B cell (primary cell): ENCODE measurements at regions of chr11 and their contacts with region 1.

Region 1: DNA sequence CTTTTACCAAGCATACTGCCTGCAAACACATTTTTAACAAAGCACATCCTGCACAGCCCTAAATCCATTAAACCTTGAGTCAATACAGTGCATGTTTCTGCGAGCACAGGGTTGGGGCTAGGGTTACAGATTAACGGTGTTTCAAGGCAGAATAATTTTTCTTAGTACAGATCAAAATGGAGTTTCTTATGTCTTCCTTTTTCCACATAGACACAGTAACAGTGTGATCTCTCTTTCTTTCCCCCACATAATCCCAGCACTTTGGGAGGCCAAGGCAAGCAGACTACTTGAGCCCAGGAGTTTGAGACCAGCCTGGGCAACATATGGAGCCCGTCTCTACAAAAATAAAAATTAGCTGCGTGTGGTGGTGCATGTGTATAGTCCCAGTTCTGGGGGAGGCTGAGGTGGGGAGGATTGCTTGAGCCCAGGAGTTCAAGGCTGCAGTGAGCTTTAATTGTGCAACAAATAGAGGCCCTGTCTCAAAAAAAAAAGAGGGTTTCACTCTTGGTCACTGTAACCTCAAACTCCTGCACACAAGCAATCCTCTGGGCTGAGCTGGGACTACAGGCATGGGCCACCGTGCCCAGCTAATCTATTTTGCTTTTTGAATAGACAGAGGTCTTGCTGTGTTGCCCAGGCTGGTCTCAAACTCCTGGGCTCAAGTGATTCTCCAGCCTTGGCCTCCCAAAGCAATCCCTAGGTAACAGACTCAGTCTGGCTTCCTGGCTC is 19.7 kb upstream of the SLC3A2 start:
- DNase-seq: no peak
- ATAC-seq: no peak
- H3K4me3 ChIP-seq: no peak overlapping the region
- H3K4me3 Mint-ChIP-seq: no peak overlapping the region
- H3K27ac ChIP-seq: no peak overlapping the region
- H3K27ac Mint-ChIP-seq: no peak overlapping the region
- H3K4me1 ChIP-seq: peaks cover 4 to 24% of the 10 kb centered on the region in 2 donors
- H3K4me1 Mint-ChIP-seq: peaks cover 19% of the 10 kb centered on the region
- H3K27me3 ChIP-seq: no peaks in the 10 kb centered on the region
- H3K27me3 Mint-ChIP-seq: no peaks in the 10 kb centered on the region
- CTCF ChIP-seq: no peak

Region 2: DNA sequence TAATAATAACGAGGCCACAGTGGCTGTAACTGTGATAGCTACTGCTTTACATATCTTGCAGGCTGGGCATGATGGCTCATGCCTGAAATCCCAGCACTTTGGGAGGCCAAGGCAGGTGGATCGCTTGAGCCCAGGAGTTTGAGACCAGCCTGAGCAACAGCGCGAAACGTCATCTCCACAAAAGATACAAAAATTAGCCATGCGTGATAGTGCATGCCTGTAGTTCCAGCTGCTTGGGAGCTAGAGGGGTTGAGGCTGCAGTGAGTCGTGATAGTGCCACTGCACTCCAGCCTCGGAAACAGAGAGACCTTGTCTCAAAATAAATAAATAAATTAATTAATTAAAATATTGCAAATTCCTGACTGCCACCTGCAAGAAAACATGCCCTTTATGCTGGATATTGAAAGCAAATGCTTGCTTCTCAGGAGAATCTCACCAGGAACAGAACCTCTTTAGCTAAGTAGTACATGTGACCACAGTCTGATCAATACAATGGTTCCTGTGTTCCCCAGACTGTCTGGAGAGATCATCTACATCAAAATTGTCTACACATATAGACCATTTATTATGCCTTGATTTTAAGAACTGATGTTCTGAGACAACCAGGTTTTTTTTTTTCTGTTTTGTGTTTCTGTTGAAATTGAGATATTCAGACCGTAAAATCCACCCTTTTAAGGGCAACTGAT is 113.4 kb before region 1 on chr11:
- CTCF ChIA-PET with region 1: no interaction called
- POLR2A ChIA-PET with region 1: interaction called, 10 read pairs
- intact Hi-C with region 1: no loop called
- DNase-seq: no peak
- ATAC-seq: no peak
- H3K4me3 ChIP-seq: no peak overlapping the region
- H3K4me3 Mint-ChIP-seq: no peak overlapping the region
- H3K27ac ChIP-seq: no peak overlapping the region
- H3K27ac Mint-ChIP-seq: no peak overlapping the region
- H3K4me1 ChIP-seq: peaks cover 0 to 4% of the 10 kb centered on the region in 2 donors
- H3K4me1 Mint-ChIP-seq: peaks cover 12% of the 10 kb centered on the region
- H3K27me3 ChIP-seq: no peaks in the 10 kb centered on the region
- H3K27me3 Mint-ChIP-seq: no peaks in the 10 kb centered on the region
- CTCF ChIP-seq: no peak

Region 3: DNA sequence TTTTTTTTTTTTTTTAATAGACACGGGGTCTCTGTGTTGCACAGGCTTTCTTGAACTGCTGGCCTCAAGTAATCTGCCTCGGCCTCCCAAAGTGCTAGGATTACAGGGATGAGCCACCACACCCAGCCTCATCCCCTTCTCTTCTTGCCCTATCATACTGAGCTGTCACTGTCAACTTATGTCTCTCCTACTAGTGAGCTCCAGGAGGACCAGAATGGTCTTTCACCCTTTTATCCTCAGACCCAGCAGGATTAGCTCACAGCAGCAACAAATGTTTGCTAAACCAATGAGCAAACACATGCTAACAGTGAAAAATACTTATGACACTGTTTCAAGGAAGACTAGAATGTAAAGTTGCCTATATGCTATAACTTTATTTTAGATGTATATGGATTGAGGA is 49.3 kb before region 1 on chr11:
- CTCF ChIA-PET with region 1: interaction called, 3 read pairs
- POLR2A ChIA-PET with region 1: interaction called, 10 read pairs
- intact Hi-C with region 1: no loop called
- DNase-seq: no peak
- ATAC-seq: no peak
- H3K4me3 ChIP-seq: no peak overlapping the region
- H3K4me3 Mint-ChIP-seq: no peak overlapping the region
- H3K27ac ChIP-seq: no peak overlapping the region
- H3K27ac Mint-ChIP-seq: peak overlapping the region; percentile 20
- H3K4me1 ChIP-seq: peaks cover 0 to under 1% of the 10 kb centered on the region in 2 donors
- H3K4me1 Mint-ChIP-seq: peaks cover 1% of the 10 kb centered on the region
- H3K27me3 ChIP-seq: no peaks in the 10 kb centered on the region
- H3K27me3 Mint-ChIP-seq: no peaks in the 10 kb centered on the region
- CTCF ChIP-seq: no peak

Region 4: GRCh38 chr11:63212742-63213141 is 351.7 kb after region 1 on chr11:
- CTCF ChIA-PET with region 1: no interaction called
- POLR2A ChIA-PET with region 1: no interaction called
- intact Hi-C with region 1: no loop called
- DNase-seq: peak; percentile 15
- ATAC-seq: no peak
- H3K4me3 ChIP-seq: no peak overlapping the region
- H3K4me3 Mint-ChIP-seq: no peak overlapping the region
- H3K27ac ChIP-seq: no peak overlapping the region
- H3K27ac Mint-ChIP-seq: no peak overlapping the region
- H3K4me1 ChIP-seq: no peaks in the 10 kb centered on the region
- H3K4me1 Mint-ChIP-seq: no peaks in the 10 kb centered on the region
- H3K27me3 ChIP-seq: peaks cover 0 to 7% (median 0%) of the 10 kb centered on the region in 4 experiments
- H3K27me3 Mint-ChIP-seq: peaks cover 29% of the 10 kb centered on the region
- CTCF ChIP-seq: peak; percentile 36

Region 5: DNA sequence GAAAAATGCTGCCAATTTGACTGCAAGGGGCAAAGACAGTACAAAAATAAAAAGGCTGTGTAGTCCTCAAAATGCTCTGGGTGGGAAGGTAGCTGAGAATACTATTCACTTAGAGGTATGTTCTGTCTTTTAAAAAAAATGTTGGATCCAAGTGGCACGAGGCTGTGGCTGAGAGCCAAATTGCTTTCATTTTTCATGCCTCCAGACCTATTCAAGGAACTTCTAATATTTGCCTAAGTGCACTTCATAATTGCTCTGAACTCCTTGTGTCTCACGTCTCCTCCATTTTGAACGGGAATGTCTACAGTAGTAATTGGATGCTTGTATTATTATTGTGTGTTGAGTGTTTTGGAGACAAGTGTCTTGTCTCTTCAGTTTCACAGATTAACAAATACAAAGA is 401.5 kb after region 1 on chr11:
- CTCF ChIA-PET with region 1: no interaction called
- POLR2A ChIA-PET with region 1: no interaction called
- intact Hi-C with region 1: no loop called
- DNase-seq: no peak
- ATAC-seq: no peak
- H3K4me3 ChIP-seq: no peak overlapping the region
- H3K4me3 Mint-ChIP-seq: no peak overlapping the region
- H3K27ac ChIP-seq: no peak overlapping the region
- H3K27ac Mint-ChIP-seq: no peak overlapping the region
- H3K4me1 ChIP-seq: no peaks in the 10 kb centered on the region
- H3K4me1 Mint-ChIP-seq: no peaks in the 10 kb centered on the region
- H3K27me3 ChIP-seq: peaks cover 0 to 2% (median 0%) of the 10 kb centered on the region in 4 experiments
- H3K27me3 Mint-ChIP-seq: peaks cover 34% of the 10 kb centered on the region
- CTCF ChIP-seq: no peak